ENCODE measurements at regions of chr16 and their contacts with region 1.

Region 1: GRCh38 chr16:11407047-11407982 is 62.1 kb downstream of the RMI2 start:
- DNase-seq: peak; percentile 76
- ATAC-seq: peak; percentile 63
- H3K4me3 Mint-ChIP-seq: no peak overlapping the region
- H3K27ac Mint-ChIP-seq: no peak overlapping the region
- H3K4me1 Mint-ChIP-seq: no peaks in the 10 kb centered on the region; the same call in 1 of the 2 replicates
- H3K27me3 Mint-ChIP-seq: no peaks in the 10 kb centered on the region
- CTCF ChIP-seq: peak; percentile 70

Region 2: GRCh38 chr16:11249233-11250061 is 157.9 kb before region 1 on chr16:
- CTCF ChIA-PET with region 1: no interaction called
- POLR2A ChIA-PET with region 1: no interaction called
- DNase-seq: no peak
- ATAC-seq: peak; percentile 10
- H3K4me3 Mint-ChIP-seq: no peak overlapping the region
- H3K27ac Mint-ChIP-seq: peak overlapping the region; percentile 84
- H3K4me1 Mint-ChIP-seq: peaks cover 32% of the 10 kb centered on the region
- H3K27me3 Mint-ChIP-seq: no peaks in the 10 kb centered on the region
- CTCF ChIP-seq: no peak

Region 3: DNA sequence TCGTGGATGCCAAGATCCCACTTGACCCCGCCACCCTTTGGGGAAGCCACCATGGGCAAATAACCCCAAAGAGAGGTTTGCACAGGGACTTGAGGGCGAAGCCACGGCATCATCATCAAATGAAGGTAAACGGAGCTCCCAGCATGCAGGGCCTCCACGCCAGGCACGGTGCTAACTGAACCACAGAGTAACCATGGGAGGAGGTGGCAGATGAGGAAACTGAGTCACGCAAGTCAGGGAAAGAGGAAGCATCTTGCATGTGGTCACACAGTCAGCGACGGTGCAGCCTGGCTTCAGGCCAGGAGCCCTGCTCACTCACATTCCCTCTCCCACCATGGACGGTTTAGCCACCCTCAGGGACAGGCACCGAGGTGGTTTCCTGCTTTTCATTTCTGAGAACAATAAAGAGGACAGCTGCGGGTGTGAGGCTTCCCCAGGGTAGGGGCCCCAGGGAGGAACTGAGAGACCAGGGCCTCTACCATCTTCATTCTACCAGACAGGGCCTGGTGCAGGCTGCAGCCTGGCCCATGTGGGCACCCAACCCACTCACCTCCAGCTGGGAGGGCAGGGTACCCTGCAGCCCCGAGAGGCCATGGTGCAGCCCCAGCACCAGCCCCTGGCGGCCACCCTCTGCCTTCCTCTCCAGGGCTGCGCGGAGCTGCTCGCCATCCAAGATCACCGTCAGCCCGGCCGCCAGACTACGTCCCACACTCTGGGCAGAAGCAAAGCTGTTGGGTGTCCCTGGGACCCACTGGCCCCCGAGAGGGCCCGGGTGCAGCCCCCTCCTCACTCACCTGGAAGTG is 16.2 kb after region 1 on chr16:
- CTCF ChIA-PET with region 1: interaction called, 20 read pairs
- POLR2A ChIA-PET with region 1: no interaction called
- DNase-seq: no peak
- ATAC-seq: no peak
- H3K4me3 Mint-ChIP-seq: no peak overlapping the region
- H3K27ac Mint-ChIP-seq: no peak overlapping the region
- H3K4me1 Mint-ChIP-seq: peaks cover 11% of the 10 kb centered on the region
- H3K27me3 Mint-ChIP-seq: no peaks in the 10 kb centered on the region
- CTCF ChIP-seq: no peak

Region 4: GRCh38 chr16:11530171-11530940 is 123.0 kb after region 1 on chr16:
- CTCF ChIA-PET with region 1: interaction called, 49 read pairs
- POLR2A ChIA-PET with region 1: no interaction called
- DNase-seq: no peak
- ATAC-seq: no peak
- H3K4me3 Mint-ChIP-seq: no peak overlapping the region
- H3K27ac Mint-ChIP-seq: peak overlapping the region; percentile 55; the same call in 1 of the 2 replicates
- H3K4me1 Mint-ChIP-seq: peaks cover 13% of the 10 kb centered on the region; the same call in 1 of the 2 replicates
- H3K27me3 Mint-ChIP-seq: no peaks in the 10 kb centered on the region
- CTCF ChIP-seq: no peak

Region 5: DNA sequence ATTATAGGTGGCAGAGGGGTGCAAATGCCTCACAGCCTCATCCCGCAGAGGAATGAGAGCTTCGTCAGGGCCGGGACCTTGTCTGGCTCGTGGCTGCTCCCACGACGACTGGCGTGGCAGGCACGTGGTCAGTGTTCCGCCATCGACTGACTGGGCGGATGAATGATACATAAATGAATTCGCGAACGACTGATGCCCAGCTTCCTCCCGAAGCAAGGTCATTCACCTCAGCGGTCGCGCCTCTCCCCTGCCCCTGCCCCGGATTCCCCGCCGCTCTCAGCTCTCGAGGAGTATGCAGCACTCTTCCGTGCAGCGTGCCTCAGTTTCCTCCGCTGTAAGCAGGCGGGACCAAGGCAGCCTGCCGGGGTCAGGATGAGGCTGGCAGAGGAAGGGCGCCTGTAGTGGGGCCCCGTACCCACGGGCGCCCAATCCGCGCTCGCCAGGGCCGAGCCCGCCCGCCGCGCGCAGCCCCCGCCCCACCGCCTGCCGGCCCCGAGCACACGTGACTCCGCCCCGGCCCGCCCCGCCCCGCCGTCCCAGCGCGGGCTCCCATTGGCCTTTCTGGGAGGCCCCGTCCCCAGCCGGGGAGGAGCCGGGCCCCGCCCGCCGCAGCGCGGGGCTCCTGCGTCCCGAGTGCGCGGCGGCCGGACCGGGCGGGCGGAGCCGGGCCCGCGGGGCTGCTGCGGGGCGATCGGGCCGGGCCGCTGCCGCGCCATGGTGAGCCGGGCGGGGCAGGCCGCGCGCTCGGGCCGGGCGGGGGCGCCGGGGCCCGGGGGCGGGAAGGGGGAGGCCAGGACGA is 260.7 kb after region 1 on chr16 and contains the start of gene SNN:
- CTCF ChIA-PET with region 1: interaction called, 12 read pairs
- POLR2A ChIA-PET with region 1: no interaction called
- DNase-seq: peak; percentile 85
- ATAC-seq: peak; percentile 81
- H3K4me3 Mint-ChIP-seq: peak within 1 kb of the TSS; percentile 70
- H3K27ac Mint-ChIP-seq: no peak within 1 kb of the TSS
- H3K4me1 Mint-ChIP-seq: peaks cover 66% of the 10 kb centered on the region
- H3K27me3 Mint-ChIP-seq: peaks cover 3% of the 10 kb centered on the region; the same call in 1 of the 2 replicates
- CTCF ChIP-seq: no peak
- total RNA-seq, gene SNN: 54.2 to 65.2 TPM (median 56.2 TPM) in 3 replicates

Region 6: GRCh38 chr16:11715246-11715947 is 308.1 kb after region 1 on chr16:
- CTCF ChIA-PET with region 1: interaction called, 14 read pairs
- POLR2A ChIA-PET with region 1: no interaction called
- DNase-seq: no peak
- ATAC-seq: no peak
- H3K4me3 Mint-ChIP-seq: no peak overlapping the region
- H3K27ac Mint-ChIP-seq: no peak overlapping the region
- H3K4me1 Mint-ChIP-seq: peaks cover 9% of the 10 kb centered on the region
- H3K27me3 Mint-ChIP-seq: no peaks in the 10 kb centered on the region
- CTCF ChIP-seq: no peak

Measured in WTC11 (cell line).